AG04450 (cell line): ENCODE measurements at regions of chr4 and their contacts with region 1.

Region 1: DNA sequence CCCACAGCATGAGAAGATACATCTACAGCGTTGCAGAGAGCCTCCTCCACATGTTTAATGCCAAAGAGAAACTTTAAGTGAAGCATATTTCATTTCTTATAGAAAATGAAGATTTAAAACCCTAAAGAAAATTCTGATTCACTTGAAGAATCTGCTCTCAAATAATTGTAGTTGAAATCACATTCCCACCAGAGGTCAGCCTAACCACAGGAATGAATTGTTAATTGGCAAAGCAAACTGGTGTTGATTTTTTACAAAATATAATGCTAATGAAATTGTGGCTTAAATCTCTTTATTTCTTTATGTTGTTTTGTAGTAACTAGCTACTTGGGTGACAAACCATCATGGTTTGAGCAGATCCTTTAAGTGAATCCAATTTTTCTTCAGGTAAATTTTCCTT is 31.1 kb upstream of the WDR17 start:
- DNase-seq: peak; percentile 16
- H3K4me3 ChIP-seq: no peak overlapping the region
- H3K27ac ChIP-seq: no peak overlapping the region
- H3K27me3 ChIP-seq: no peaks in the 10 kb centered on the region
- CTCF ChIP-seq: peak; percentile 43

Region 2: DNA sequence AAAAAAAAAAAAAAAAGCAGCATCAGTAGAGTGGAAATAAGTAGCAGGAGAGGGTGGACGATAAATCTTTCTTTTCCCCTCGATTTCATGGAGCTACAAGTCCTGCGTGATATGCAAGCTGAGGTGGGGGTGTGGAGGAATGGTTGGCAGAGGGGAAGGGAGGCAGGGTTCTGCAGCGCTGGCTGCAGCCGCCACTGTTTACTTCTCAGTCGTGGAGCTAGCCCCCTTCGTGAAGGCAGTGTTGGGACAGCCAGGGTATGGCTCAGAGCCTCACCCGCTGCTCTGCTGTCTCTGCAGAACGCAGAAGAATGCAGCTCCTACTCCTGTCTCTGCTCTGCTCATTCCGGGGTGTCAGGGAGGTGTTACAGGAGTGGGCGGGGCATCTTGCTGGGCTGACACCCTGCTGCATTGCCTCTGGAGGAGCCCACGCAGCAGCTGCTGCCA is 363.0 kb before region 1 on chr4:
- CTCF ChIA-PET with region 1: interaction called, 10 read pairs
- POLR2A ChIA-PET with region 1: no interaction called
- DNase-seq: no peak
- H3K4me3 ChIP-seq: no peak overlapping the region
- H3K27ac ChIP-seq: no peak overlapping the region
- H3K27me3 ChIP-seq: no peaks in the 10 kb centered on the region
- CTCF ChIP-seq: no peak

Region 3: DNA sequence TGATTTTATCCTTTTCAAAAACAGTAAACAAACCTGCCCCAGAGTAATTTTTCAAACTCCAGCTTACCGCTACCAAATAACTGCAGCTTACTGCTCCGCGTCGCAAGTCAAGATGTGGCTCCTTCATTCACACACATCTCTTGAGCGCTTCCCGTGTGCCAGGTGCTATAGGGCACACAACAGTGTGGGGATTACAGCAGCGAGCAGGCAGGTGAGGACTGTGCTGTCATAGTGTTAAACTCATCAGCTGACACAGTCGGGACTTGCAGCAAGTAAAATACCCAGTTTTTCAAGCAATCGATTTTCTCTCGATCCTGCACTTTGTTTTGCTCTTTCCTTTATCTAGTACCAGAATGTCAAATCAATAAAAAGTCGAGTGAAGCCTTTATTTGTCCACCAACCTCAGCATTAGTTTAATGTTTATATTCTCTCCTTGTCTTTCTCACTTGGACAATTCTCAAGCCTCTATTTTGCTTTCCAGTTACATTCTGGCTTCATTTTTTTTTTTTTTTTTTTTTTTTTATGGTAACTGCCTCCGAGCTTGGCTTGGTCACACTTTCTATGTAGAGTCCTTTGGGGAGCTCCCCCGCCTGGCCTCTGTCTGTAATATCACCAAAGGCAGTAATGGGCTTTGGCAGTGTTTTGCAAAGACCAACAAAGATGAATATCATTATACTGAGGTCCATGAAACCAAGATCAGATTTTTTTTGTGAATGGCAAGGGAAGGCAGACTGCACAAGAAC is 242.8 kb after region 1 on chr4:
- CTCF ChIA-PET with region 1: interaction called, 12 read pairs
- POLR2A ChIA-PET with region 1: no interaction called
- DNase-seq: peak; percentile 43
- H3K4me3 ChIP-seq: no peak overlapping the region
- H3K27ac ChIP-seq: no peak overlapping the region
- H3K27me3 ChIP-seq: no peaks in the 10 kb centered on the region
- CTCF ChIP-seq: peak; percentile 75